Calu3 (cell line): ENCODE measurements at regions of chr19 and their contacts with region 1.

Region 1: GRCh38 chr19:30029721-30030510 is 87.9 kb downstream of the URI1 start:
- DNase-seq: no peak
- H3K4me3 Mint-ChIP-seq: no peak overlapping the region
- H3K27ac Mint-ChIP-seq: no peak overlapping the region
- H3K4me1 Mint-ChIP-seq: peaks cover 17% of the 10 kb centered on the region
- H3K27me3 Mint-ChIP-seq: no peaks in the 10 kb centered on the region
- CTCF ChIP-seq: no peak

Region 2: DNA sequence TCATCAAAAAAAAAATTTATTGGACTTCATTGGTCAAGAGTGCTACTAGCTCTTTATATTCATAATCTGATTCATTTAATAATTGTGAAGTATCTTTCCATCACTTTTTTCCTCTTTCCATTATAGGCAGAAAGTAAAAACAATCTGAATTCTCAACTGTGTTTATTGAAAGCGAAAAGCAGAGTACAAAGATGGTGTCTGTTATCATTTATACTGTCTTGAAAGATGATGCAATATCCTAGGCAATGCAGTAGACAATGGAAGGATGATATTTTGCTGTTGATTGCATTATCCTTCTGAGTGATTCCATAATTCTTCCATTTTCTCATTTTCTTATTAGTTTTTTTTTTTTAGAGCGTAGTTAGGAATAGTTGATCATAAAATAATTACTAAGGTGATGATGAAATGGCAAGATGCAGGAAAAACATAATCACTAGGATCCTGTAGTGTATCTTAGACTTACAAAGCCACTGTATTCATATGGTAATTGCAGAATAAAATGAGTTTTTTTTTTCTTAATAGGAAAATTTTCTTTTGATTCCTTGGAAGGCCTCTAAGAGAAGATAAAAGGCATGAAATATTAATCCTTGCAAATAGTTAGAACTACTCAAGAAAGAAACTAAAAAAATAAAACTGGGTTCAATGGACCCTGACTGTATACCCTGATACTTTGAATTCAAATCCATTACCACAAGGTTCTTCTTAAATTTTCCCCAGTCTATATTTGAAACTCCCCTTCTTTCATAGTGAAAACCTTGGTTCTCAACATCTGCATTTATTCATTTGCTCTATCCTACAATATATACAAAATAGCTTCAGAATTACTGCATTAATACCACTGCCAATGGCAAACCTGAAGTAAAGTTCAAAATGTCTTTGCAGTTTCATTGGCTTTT is 76.3 kb before region 1 on chr19:
- CTCF ChIA-PET with region 1: no interaction called
- intact Hi-C with region 1: no loop called
- DNase-seq: no peak
- H3K4me3 Mint-ChIP-seq: no peak overlapping the region
- H3K27ac Mint-ChIP-seq: no peak overlapping the region
- H3K4me1 Mint-ChIP-seq: peaks cover 9% of the 10 kb centered on the region
- H3K27me3 Mint-ChIP-seq: no peaks in the 10 kb centered on the region
- CTCF ChIP-seq: no peak

Region 3: GRCh38 chr19:29983568-29983967 is 46.3 kb before region 1 on chr19:
- CTCF ChIA-PET with region 1: no interaction called
- intact Hi-C with region 1: loop called (anchors 5 kb)
- DNase-seq: no peak
- H3K4me3 Mint-ChIP-seq: no peak overlapping the region
- H3K27ac Mint-ChIP-seq: no peak overlapping the region
- H3K4me1 Mint-ChIP-seq: no peaks in the 10 kb centered on the region
- H3K27me3 Mint-ChIP-seq: no peaks in the 10 kb centered on the region
- CTCF ChIP-seq: no peak